Calu3 (cell line): ENCODE measurements at regions of chr5 and their contacts with region 1.

Region 1: DNA sequence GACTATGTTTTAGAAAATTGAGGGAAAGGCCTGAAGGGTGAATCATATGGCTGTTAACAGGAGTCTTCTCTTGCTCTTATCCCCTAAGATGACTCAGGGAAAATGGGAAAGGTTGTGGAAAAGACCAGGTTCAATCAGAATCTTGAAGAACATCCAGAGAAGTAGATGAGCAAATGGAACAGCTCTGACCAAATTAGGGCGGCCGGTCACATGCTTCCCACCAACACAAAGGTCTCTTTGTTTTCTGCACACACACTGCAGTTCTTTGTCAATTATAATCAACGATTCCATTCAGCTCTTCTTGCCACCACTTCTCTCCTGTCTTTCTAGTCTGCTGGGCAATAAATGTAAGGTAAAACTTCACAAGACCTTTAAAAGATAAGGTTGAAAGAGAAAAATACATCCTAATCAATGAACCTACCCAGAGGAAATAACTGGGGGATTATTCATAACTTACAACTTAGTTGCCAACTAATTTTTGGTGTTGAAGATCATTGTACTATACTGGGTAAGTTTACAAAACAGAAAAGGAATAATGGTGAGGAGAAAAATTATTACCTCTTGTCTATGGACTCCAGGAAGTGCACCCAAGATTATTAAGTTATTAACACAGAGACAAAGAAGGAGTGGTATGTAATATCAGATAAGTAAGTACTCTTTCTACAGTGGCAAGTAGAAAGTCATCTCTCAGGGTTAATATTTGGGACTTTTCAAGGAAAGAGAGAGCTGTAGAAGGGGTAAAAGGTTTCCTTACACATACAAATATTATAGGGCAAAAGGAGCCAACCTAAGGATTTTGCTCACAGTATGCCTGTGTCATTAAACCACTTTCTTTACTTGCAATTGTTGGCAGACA is 441.9 kb upstream of the PIK3R1 start:
- DNase-seq: peak; percentile 75
- H3K4me3 Mint-ChIP-seq: peak overlapping the region; percentile 49
- H3K27ac Mint-ChIP-seq: peak overlapping the region; percentile 100
- H3K4me1 Mint-ChIP-seq: peaks cover 67% of the 10 kb centered on the region
- H3K27me3 Mint-ChIP-seq: no peaks in the 10 kb centered on the region
- CTCF ChIP-seq: no peak

Region 2: GRCh38 chr5:67493676-67494075 is 280.0 kb before region 1 on chr5:
- CTCF ChIA-PET with region 1: interaction called, 4 read pairs
- intact Hi-C with region 1: loop called (anchors 1 kb)
- DNase-seq: peak; percentile 55
- H3K4me3 Mint-ChIP-seq: no peak overlapping the region
- H3K27ac Mint-ChIP-seq: no peak overlapping the region
- H3K4me1 Mint-ChIP-seq: peaks cover 25% of the 10 kb centered on the region
- H3K27me3 Mint-ChIP-seq: no peaks in the 10 kb centered on the region
- CTCF ChIP-seq: no peak

Region 3: DNA sequence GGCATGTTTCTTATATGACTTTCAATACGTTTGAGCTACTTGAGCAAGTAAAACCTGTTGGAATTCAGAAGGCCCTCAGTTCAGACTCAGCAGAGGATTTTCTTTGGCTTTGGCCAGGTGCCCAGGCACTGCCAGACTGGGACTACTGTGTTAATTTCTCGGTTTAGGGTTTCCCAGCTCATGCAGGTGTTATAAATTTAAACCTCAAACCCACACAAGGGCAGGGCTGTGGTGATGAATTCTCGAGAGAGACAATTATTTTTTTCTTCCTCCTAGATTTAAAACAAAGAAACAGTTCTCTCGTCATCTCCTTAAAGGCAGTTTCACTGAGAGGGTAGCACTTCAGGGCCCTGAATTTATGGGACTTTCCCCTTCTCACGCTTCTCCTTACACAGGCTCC is 36.0 kb after region 1 on chr5:
- CTCF ChIA-PET with region 1: no interaction called
- intact Hi-C with region 1: loop called (anchors 5 kb)
- DNase-seq: peak; percentile 64
- H3K4me3 Mint-ChIP-seq: peak overlapping the region; percentile 21
- H3K27ac Mint-ChIP-seq: peak overlapping the region; percentile 44
- H3K4me1 Mint-ChIP-seq: peaks cover 55% of the 10 kb centered on the region
- H3K27me3 Mint-ChIP-seq: no peaks in the 10 kb centered on the region
- CTCF ChIP-seq: no peak

Region 4: GRCh38 chr5:68200288-68200687 is 426.6 kb after region 1 on chr5:
- CTCF ChIA-PET with region 1: no interaction called
- intact Hi-C with region 1: loop called (anchors 5 kb)
- DNase-seq: no peak
- H3K4me3 Mint-ChIP-seq: no peak overlapping the region
- H3K27ac Mint-ChIP-seq: no peak overlapping the region
- H3K4me1 Mint-ChIP-seq: peaks cover 17% of the 10 kb centered on the region
- H3K27me3 Mint-ChIP-seq: no peaks in the 10 kb centered on the region
- CTCF ChIP-seq: no peak

Region 5: DNA sequence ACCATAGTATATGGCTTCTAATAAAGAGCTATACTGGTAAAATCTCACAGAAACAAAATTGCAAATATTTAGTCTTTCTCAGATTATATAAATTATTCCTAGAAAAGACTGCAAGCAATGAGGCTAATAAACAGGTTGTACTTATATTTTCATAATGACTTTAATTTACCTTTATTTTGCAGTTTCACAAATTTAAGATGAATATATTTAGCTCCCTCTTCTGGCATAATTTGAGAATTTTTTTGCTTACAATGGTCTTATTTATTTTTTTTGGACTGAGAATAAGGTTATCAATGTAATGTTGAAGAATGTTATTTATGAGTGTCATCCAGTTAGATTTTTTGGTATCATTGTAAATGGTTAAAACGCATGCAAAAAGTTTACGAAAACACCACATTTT is 498.6 kb after region 1 on chr5:
- CTCF ChIA-PET with region 1: interaction called, 3 read pairs
- intact Hi-C with region 1: loop called (anchors 5 kb)
- DNase-seq: no peak
- H3K4me3 Mint-ChIP-seq: no peak overlapping the region
- H3K27ac Mint-ChIP-seq: no peak overlapping the region
- H3K4me1 Mint-ChIP-seq: peaks cover 72% of the 10 kb centered on the region
- H3K27me3 Mint-ChIP-seq: no peaks in the 10 kb centered on the region
- CTCF ChIP-seq: no peak